Activated naive CD4-positive, alpha-beta T cell treated with anti-CD3 and anti-CD28 coated beads for 36 hours (primary cell): ENCODE measurements at regions of chr5 and their contacts with region 1.

Region 1: GRCh38 chr5:112976432-112977309 is at the start of gene DCP2:
- DNase-seq: peak; percentile 96
- H3K4me3 Mint-ChIP-seq: peak within 1 kb of the TSS; percentile 96
- H3K27ac Mint-ChIP-seq: peak within 1 kb of the TSS; percentile 95
- H3K4me1 Mint-ChIP-seq: peaks cover 38% of the 10 kb centered on the region
- H3K27me3 Mint-ChIP-seq: no peaks in the 10 kb centered on the region
- total RNA-seq, gene DCP2: 129 TPM

Region 2: GRCh38 chr5:111229871-111230810 is 1746.5 kb before region 1 on chr5:
- CTCF ChIA-PET with region 1: no interaction called
- intact Hi-C with region 1: loop called (anchors 10 kb)
- DNase-seq: peak; percentile 43
- H3K4me3 Mint-ChIP-seq: peak overlapping the region; percentile 68
- H3K27ac Mint-ChIP-seq: peak overlapping the region; percentile 94
- H3K4me1 Mint-ChIP-seq: peaks cover 69% of the 10 kb centered on the region
- H3K27me3 Mint-ChIP-seq: no peaks in the 10 kb centered on the region

Region 3: GRCh38 chr5:112737463-112738190 is 239.0 kb before region 1 on chr5 and contains the start of gene APC:
- CTCF ChIA-PET with region 1: no interaction called
- intact Hi-C with region 1: loop called (anchors 2 kb)
- DNase-seq: peak; percentile 92
- H3K4me3 Mint-ChIP-seq: peak within 1 kb of the TSS; percentile 95
- H3K27ac Mint-ChIP-seq: no peak within 1 kb of the TSS
- H3K4me1 Mint-ChIP-seq: peaks cover 18% of the 10 kb centered on the region
- H3K27me3 Mint-ChIP-seq: no peaks in the 10 kb centered on the region
- total RNA-seq, gene APC: 15.6 to 17.2 TPM

Region 4: DNA sequence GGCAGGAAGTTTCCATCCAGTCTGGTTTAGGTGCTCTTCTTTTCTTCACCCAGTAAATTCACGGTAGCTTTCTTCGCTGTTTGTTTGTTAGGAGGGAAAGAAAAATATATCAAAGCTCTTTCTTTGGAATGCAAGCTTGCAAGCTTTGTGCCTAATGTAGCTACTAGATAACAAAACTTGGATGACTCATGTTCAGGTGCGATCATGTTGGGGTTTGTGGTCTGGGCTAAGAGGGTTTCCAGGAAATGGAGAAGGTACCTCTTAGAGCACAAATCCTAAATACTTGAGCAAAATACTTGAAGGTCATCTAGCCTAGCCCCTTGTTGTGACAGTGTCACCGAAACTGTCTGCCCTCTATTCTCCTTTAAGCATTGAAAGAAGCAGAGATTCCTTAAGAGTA is 97.9 kb before region 1 on chr5:
- CTCF ChIA-PET with region 1: interaction called, 4 read pairs
- intact Hi-C with region 1: loop called (anchors 5 kb)
- DNase-seq: peak; percentile 80
- H3K4me3 Mint-ChIP-seq: no peak overlapping the region
- H3K27ac Mint-ChIP-seq: peak overlapping the region; percentile 71
- H3K4me1 Mint-ChIP-seq: peaks cover 27% of the 10 kb centered on the region
- H3K27me3 Mint-ChIP-seq: no peaks in the 10 kb centered on the region

Region 5: DNA sequence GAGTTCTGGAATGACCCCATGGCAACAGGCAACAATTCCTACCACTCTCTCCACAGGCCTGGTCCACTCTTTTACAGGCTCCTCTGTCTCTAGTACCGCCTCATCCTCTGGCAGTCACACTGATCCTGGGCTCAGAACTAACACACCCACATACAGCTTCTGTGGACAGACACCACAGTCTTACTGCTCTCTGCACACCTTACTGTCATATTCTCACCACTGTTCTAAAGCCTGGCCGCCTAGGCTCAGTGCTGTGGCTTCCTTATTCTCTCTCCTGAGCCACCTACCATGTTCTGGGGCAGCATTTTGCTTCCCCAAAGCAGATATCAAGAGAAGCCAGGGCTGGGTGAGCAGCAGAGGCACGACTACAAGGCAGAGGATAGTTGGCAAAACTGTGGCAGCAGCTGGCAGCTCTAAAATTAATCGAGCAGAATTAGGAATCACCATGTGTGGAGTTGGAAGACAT is 69.5 kb before region 1 on chr5:
- CTCF ChIA-PET with region 1: no interaction called
- intact Hi-C with region 1: no loop called
- DNase-seq: no peak
- H3K4me3 Mint-ChIP-seq: no peak overlapping the region
- H3K27ac Mint-ChIP-seq: no peak overlapping the region
- H3K4me1 Mint-ChIP-seq: peaks cover 9% of the 10 kb centered on the region
- H3K27me3 Mint-ChIP-seq: no peaks in the 10 kb centered on the region

Region 6: GRCh38 chr5:113022661-113023060 is 46.0 kb after region 1 on chr5:
- CTCF ChIA-PET with region 1: no interaction called
- intact Hi-C with region 1: loop called (anchors 1 kb)
- DNase-seq: no peak
- H3K4me3 Mint-ChIP-seq: no peak overlapping the region
- H3K27ac Mint-ChIP-seq: peak overlapping the region; percentile 60
- H3K4me1 Mint-ChIP-seq: peaks cover 49% of the 10 kb centered on the region
- H3K27me3 Mint-ChIP-seq: no peaks in the 10 kb centered on the region

Region 7: GRCh38 chr5:113246361-113246870 is 269.7 kb after region 1 on chr5:
- CTCF ChIA-PET with region 1: no interaction called
- intact Hi-C with region 1: no loop called
- DNase-seq: no peak
- H3K4me3 Mint-ChIP-seq: no peak overlapping the region
- H3K27ac Mint-ChIP-seq: no peak overlapping the region
- H3K4me1 Mint-ChIP-seq: peaks cover 2% of the 10 kb centered on the region
- H3K27me3 Mint-ChIP-seq: peaks cover 12% of the 10 kb centered on the region